ENCODE measurements at regions of chr17 and their contacts with region 1.

Region 1: DNA sequence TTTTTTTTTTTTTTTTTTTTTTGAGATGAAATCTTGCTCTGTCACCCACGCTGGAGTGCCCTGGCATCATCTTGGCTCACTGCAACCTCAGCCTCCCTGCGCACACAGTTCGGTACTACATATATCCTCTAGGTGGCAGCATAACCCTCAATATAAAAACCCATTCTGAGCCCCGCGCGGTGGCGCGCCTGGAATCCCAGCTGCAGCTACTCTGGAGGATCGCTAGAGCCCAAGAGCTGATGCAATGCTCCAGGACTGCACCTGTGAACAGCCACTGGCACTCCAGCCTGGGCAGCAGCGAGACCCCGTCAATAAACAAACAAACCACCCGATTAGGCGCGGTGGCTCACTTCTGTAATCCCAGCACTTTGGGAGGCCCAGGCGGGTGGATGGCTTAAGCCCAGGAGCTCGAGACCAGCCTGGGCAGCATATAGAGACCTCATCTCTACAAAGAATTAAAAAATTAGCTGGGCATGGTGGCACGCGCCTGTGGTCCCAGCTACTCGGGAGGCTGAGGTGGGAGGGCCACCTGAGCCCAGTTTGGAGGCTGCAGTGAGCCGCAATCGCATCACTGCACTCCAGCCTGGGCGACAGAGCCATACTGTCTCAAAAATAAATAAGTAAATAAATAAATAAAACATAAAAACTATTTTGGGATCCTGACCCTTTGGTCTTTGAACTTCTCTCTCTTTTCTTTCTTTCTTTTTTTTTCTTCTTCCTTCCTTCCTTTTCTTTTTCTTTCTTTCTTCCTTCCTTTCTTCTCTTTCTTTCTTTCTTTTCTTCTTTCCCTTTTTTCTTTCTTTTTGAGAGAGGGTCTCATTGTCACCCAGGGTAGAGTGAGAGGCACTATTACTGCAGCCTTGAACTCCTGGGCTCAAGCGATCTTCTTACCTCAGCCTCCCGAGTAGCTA is 15.4 kb upstream of the AKAP10 start:
- DNase-seq: peak; percentile 89
- ATAC-seq: peak; percentile 98

Region 2: GRCh38 chr17:19897901-19898300 is 95.2 kb before region 1 on chr17:
- intact Hi-C with region 1: no loop called
- DNase-seq: no peak
- ATAC-seq: peak in 1 of 2 donors; percentile 32

Region 3: GRCh38 chr17:20226814-20227482 is 233.9 kb after region 1 on chr17:
- intact Hi-C with region 1: loop called in 1 of 2 experiments (anchors 10 kb)
- DNase-seq: peak; percentile 87
- ATAC-seq: peak; percentile 97 to 98

Measured in left cardiac atrium (tissue), 4 donors.